Common myeloid progenitor, CD34-positive (primary cell): ENCODE measurements at regions of chr12 and their contacts with region 1.

Region 1: GRCh38 chr12:120649442-120650232 is 9.2 kb downstream of the CABP1 start:
- DNase-seq: peak in 2 of 3 donors; percentile 50 to 62
- H3K4me3 ChIP-seq: peak overlapping the region in 4 of 7 experiments; percentile 26 to 66 (median 62)
- H3K27ac ChIP-seq: no peak overlapping the region
- H3K4me1 ChIP-seq: peaks cover 0 to 17% (median 15%) of the 10 kb centered on the region in 4 experiments
- H3K27me3 ChIP-seq: peaks cover 0 to 34% (median 30%) of the 10 kb centered on the region in 5 experiments

Region 2: GRCh38 chr12:120346681-120347080 is 303.0 kb before region 1 on chr12:
- CTCF ChIA-PET with region 1: no interaction called
- POLR2A ChIA-PET with region 1: no interaction called
- DNase-seq: no peak
- H3K4me3 ChIP-seq: no peak overlapping the region
- H3K27ac ChIP-seq: no peak overlapping the region
- H3K4me1 ChIP-seq: no peaks in the 10 kb centered on the region
- H3K27me3 ChIP-seq: peaks cover 0 to 13% (median 0%) of the 10 kb centered on the region in 5 experiments

Region 3: DNA sequence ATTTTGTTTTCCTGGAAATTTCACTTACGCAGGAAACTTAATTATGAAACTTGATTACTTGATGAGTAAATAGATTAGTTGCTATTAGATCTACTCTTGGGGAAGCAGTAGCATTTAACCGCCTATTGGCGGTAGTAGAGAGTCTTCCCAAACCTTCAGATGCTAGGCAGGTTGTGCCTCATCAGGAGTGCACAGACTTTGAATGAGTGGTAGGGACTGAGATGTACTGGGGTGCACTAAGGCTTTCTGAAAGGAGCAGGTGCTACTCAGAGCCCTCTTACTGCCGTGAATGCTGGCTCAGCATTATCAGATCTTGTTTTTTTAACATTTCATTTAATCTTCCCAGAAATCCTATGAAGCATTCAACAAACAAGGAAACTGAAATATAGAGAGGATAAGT is 195.7 kb before region 1 on chr12:
- CTCF ChIA-PET with region 1: no interaction called
- POLR2A ChIA-PET with region 1: no interaction called
- DNase-seq: peak in 2 of 3 donors; percentile 60
- H3K4me3 ChIP-seq: no peak overlapping the region
- H3K27ac ChIP-seq: no peak overlapping the region
- H3K4me1 ChIP-seq: no peaks in the 10 kb centered on the region
- H3K27me3 ChIP-seq: no peaks in the 10 kb centered on the region

Region 4: DNA sequence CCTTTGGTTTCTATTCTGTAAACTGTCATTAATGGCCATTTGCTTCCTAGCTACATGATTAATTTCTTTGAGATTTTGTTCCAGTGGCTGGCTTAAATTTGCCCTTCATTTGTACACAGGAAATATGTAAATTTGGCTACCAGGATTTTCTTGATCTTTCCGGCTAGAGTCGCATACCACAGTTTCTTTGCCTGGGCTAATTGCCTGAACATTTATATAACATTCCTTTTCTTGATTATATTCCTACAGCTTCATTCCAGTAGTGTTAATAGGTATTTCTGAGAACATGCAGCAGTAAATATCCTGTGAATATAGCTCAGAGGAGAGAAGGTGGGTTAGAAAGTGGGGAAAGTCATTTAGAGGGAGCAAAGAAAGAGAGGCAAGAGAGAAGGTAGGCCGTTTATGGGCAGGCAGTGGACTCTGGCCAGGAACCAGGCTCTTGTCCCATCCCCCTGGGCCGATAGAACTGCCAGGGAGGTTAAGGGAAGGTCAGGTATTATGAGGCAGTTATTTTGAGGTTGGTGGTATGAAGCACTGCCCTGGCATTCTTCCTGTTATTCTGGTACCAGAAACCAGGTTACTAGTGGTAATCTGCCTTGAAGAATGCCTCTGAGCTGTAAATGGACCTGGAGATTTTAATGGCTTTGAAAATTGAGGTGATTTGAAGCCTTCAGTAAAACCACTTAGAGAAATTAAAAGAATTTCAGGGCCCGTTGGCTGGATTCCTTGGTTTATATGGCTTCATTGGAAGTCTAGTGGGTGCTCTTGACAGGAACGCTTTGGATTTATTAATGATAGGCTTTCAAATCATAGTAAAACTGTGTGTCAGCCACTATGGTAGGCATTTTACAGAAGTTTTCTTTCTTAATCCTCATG is 111.1 kb before region 1 on chr12:
- CTCF ChIA-PET with region 1: no interaction called
- POLR2A ChIA-PET with region 1: no interaction called
- DNase-seq: peak in 2 of 3 donors; percentile 67 to 80
- H3K4me3 ChIP-seq: peak overlapping the region in 6 of 7 experiments; percentile 32 to 84 (median 50)
- H3K27ac ChIP-seq: peak overlapping the region; percentile 36 to 79
- H3K4me1 ChIP-seq: peaks cover 40 to 65% (median 56%) of the 10 kb centered on the region in 4 experiments
- H3K27me3 ChIP-seq: no peaks in the 10 kb centered on the region

Region 5: DNA sequence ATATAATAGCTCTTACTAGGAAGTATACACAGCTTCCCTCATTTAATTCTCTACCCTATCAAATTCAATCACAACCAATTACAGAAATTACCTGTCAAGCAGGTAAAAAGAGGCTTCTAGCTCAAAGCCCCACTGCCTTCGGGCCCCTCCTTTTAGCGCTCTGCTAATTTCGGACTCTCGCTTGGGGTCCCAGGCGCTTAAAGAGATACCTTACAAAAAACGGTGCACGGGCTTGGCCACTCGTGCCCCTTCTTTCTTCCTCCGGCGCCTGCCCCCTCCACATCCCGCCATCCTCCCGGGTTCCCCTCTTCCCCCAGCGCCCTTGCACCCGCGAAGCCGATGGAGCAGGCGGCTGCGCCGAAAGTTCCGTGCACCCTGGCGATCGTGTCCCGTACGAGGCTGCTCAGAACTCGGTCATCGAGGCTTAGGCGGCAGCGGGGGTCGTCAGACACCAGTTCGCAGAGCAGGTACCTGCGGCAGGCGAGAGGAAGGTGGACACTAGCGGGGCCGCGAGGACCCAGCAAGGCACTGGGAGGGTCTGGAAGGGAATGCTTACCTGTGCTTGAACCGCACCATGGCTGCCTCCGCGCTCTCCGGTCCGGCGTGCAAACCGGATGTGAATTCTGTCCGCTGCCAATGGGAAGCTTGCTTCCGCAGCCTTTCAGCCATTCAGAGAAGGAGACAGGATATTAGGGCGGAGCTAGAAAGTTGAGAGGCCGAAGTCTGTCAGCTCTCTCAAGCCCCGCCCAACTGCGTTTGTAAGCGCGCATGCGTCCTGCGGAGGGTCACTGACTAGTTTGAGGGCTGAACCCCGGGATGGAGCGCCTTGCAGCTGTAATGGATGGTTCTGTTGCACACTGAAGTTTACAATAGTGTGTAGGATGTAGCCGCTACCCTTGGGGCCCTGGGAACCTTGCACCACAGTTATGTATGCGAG is 68.6 kb before region 1 on chr12 and contains the start of gene POP5:
- CTCF ChIA-PET with region 1: interaction called, 58 read pairs
- POLR2A ChIA-PET with region 1: interaction called, 4 read pairs
- DNase-seq: peak; percentile 96 to 97 (median 97)
- H3K4me3 ChIP-seq: peak within 1 kb of the TSS; percentile 76 to 96 (median 91)
- H3K27ac ChIP-seq: peak within 1 kb of the TSS; percentile 60 to 78
- H3K4me1 ChIP-seq: peaks cover 8 to 34% (median 21%) of the 10 kb centered on the region in 4 experiments
- H3K27me3 ChIP-seq: peaks cover 0 to 23% (median 9%) of the 10 kb centered on the region in 5 experiments

Region 6: GRCh38 chr12:120598674-120599463 is 50.8 kb before region 1 on chr12:
- CTCF ChIA-PET with region 1: interaction called, 15 read pairs
- POLR2A ChIA-PET with region 1: no interaction called
- DNase-seq: peak in 2 of 3 donors; percentile 34 to 44
- H3K4me3 ChIP-seq: no peak overlapping the region
- H3K27ac ChIP-seq: no peak overlapping the region
- H3K4me1 ChIP-seq: peaks cover 2 to 28% (median 9%) of the 10 kb centered on the region in 4 experiments
- H3K27me3 ChIP-seq: no peaks in the 10 kb centered on the region

Region 7: DNA sequence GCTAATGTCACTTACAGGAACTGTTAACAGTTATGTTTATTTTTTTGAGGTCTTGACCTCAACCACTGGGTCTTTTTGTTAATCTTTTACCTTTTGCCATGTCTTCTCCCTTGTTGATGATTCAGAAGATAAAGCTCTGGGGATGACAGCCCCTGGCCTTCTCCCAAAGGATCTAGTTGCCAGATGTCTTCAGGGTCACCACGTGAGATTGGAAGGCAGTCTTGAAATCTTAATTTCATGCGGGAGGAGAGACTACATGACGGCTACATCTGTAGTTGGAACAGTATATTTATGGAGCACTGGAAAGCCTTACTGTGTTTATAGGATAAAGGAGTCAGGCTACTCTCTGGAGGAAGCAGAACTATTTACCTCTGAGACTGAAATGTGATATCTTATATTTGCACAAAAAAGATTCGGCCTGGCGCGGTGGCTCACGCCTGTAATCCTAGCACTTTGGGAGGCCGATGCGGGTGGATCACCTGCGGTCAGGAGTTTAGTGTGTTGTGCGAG is 42.9 kb after region 1 on chr12:
- CTCF ChIA-PET with region 1: interaction called, 16 read pairs
- POLR2A ChIA-PET with region 1: no interaction called
- DNase-seq: no peak
- H3K4me3 ChIP-seq: no peak overlapping the region
- H3K27ac ChIP-seq: peak overlapping the region in 1 of 2 experiments; percentile 50
- H3K4me1 ChIP-seq: peaks cover 18 to 42% (median 27%) of the 10 kb centered on the region in 4 experiments
- H3K27me3 ChIP-seq: no peaks in the 10 kb centered on the region

Region 8: GRCh38 chr12:120710031-120710804 is 60.6 kb after region 1 on chr12 and contains the start of gene UNC119B:
- CTCF ChIA-PET with region 1: interaction called, 82 read pairs
- POLR2A ChIA-PET with region 1: no interaction called
- DNase-seq: peak; percentile 59 to 75 (median 72)
- H3K4me3 ChIP-seq: peak within 1 kb of the TSS; percentile 67 to 94 (median 87)
- H3K27ac ChIP-seq: peak within 1 kb of the TSS; percentile 85 to 89
- H3K4me1 ChIP-seq: peaks cover 0 to 28% (median 20%) of the 10 kb centered on the region in 4 experiments
- H3K27me3 ChIP-seq: no peaks in the 10 kb centered on the region

Region 9: DNA sequence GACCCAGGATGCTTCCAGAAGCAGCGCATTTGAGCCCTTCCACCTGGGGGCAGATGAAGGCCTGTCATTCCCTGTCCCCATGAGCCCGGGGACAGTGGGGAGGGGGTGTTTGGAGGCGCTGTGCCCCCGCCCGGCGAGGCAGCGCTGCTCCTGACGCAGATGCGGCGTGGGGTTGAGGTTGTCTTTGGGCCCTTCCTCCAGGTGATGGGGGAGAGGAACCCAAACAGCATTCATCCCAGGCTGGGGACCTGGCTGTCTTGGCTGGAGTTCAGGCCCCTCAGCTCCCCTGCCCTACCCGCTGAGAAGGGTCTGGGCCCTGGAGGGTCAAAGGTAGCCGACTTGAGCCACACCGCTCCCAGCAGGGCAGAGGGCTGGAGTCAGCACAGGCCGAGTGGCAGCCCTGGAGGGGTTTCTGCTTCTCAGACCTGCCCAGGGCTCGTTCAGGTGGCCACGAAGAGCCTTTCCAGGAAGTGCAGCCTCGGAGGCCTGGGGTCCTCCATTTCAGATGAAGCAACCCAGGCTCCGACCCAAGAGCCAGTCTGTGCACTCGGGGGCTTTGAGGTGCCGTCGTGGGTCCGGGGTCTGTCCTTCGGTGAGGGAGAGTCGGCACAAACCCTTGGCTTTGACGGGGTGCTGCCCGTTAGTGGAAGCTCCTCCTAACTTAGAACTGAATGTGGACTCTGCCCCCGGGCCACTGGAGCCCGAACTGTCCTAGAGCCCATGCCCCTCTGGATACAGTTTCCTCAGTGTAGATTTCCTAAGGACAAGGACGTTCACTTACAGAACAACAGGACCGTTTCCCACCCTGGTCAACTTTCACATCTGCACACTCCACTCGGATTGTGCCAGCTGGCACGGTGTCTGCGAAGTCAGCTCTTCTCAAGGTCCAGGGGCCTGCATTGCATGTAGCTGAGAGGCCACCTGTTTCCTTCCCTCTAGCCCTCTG is 92.1 kb after region 1 on chr12:
- CTCF ChIA-PET with region 1: no interaction called
- POLR2A ChIA-PET with region 1: no interaction called
- DNase-seq: no peak
- H3K4me3 ChIP-seq: no peak overlapping the region
- H3K27ac ChIP-seq: no peak overlapping the region
- H3K4me1 ChIP-seq: no peaks in the 10 kb centered on the region
- H3K27me3 ChIP-seq: no peaks in the 10 kb centered on the region